ENCODE measurements at regions of chr7 and their contacts with region 1.

Region 1: DNA sequence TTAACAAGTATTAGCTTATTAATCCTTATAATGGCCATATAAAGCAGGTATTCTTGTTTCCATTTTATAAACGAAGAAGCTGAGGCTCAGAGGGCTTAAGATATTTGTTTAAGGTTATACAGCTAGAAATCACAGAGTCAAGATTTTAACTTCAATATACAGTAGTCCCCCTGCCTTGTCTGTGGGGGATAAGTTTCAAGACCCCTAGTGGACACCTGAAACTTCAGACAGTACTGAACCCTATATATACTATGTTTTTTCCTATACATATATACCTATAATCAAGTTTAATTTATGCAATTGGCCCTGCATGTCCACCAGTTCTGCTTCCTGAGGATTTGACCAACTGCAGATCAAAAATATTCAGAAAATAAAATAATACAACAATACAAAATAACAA is 44.4 kb upstream of the STRIP2 start:
- DNase-seq: no peak
- H3K4me3 ChIP-seq: no peak overlapping the region
- H3K27ac ChIP-seq: no peak overlapping the region
- H3K4me1 ChIP-seq: peaks cover 0 to 5% (median 1%) of the 10 kb centered on the region in 4 experiments; a peak in 2 of 7 replicates
- H3K27me3 ChIP-seq: no peaks in the 10 kb centered on the region
- CTCF ChIP-seq: no peak
- EP300 ChIP-seq: no peak
- POLR2A ChIP-seq: no peak
- RAD21 ChIP-seq: no peak

Region 2: DNA sequence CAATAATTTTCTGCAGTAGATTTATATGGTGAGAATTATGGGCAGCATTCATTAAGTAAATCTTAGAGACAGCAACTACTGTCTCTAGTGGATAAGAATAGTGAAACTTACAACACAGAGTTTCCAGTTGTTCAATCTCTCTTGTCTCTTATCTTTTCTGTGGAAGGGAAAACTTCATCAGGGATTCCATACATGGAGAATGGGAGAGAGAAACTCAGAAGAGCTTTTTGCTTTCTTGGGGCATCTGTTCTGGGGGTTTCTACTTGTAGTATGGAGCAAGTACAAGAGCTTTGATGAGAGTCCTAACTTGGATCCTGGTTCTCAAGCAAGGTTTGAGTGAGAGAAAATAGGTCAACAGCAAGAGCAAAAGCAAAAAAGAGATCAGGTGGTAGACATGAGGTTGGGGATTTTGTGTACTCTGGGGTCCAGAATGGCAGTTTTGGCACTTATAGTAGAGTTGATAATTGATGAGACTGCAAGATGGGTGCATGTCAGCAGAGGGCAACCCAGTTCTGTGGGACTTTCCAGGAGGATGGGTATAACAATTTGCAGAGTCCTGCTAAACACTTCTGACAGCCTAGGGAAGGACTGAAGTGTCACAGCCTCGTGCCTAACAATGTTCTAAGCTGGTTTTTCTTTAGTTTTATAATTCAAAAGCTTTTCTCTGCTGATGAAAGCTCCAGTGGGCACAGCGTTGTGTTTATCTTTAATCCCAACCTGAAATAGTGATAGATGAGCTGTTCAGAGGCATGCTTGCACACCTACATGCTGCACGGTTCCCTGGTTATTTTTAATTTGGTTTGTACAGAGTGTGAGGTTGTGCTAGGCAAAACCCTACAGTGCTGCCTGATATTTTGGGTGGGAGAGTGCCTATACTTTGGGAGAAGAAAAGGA is 12.4 kb after region 1 on chr7:
- CTCF ChIA-PET with region 1: interaction called, 12 read pairs
- POLR2A ChIA-PET with region 1: no interaction called
- DNase-seq: no peak
- H3K4me3 ChIP-seq: no peak overlapping the region
- H3K27ac ChIP-seq: no peak overlapping the region
- H3K4me1 ChIP-seq: peaks cover 0 to 3% (median 1%) of the 10 kb centered on the region in 4 experiments; a peak in 1 of 7 replicates
- H3K27me3 ChIP-seq: no peaks in the 10 kb centered on the region
- CTCF ChIP-seq: peak in 2 of 3 experiments; percentile 5 to 23; a peak in 2 of 4 replicates
- EP300 ChIP-seq: no peak
- POLR2A ChIP-seq: no peak
- RAD21 ChIP-seq: peak; percentile 43 to 52

Region 3: DNA sequence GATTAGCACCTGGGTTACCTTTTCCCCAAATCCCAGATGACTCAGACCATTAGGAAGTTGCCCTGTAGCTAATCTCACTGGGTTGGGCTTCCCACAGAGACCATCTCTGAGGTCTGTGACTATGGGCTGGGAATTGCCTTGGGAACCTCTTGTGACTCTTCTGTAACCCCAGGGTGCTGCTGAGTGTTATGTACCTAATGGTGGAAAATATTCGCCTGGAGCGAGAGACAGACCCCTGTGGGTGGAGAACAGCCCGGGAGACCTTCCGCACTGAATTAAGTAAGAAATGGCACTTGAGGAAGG is 64.4 kb after region 1 on chr7:
- CTCF ChIA-PET with region 1: no interaction called
- POLR2A ChIA-PET with region 1: no interaction called
- DNase-seq: no peak
- H3K4me3 ChIP-seq: no peak overlapping the region
- H3K27ac ChIP-seq: no peak overlapping the region
- H3K4me1 ChIP-seq: no peaks in the 10 kb centered on the region
- H3K27me3 ChIP-seq: no peaks in the 10 kb centered on the region
- CTCF ChIP-seq: no peak
- EP300 ChIP-seq: no peak
- POLR2A ChIP-seq: no peak
- RAD21 ChIP-seq: no peak